B cell (primary cell): ENCODE measurements at regions of chr3 and their contacts with region 1.

Region 1: DNA sequence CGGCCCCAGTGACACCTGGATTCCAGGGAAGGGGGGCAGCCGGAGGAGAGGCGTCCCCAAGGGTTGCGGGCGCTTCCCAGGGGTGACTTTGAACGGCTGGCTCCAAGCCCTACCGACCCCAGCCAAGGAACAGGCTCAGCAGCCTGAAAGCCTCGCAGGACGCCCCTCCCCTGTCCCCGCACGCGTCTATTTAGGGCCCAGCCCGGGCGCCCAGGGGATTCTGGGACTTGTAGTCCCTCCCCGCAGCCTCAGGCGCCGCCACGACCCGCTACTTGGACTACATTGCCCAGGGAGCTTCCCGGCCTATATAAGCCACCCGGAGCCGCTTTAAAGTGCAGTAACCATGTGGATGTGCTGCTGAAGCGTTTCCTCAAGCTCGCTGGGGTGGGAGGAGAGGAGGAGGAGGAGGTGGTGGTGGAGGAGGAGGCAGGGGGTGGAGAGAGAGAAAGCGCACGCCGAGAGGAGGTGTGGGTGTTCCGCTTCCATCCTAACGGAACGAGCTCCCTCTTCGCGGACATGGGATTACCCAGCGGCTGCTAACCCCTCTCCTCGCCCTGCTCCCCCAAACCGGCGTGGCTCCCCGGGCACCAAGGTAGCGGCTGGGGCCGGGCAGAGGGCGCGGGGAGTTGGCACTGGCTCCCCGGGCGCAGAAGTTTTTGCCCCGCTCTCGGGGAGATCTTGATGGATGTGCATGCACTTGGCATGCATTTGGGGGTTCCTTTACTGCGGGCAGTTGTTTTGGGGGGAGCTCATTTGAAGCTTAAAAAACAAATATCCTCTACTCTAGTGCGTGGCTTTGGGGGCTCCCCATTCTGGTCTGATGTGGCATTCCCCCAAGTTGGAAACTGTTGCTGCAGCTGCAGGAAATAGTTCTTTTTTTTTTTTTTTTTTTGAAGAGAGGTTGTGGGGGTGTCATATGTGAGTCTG is at the start of gene ITPR1:
- DNase-seq: peak; percentile 98
- ATAC-seq: peak; percentile 88
- H3K4me3 ChIP-seq: peak within 1 kb of the TSS; percentile 90 to 98 (median 92)
- H3K4me3 Mint-ChIP-seq: peak within 1 kb of the TSS; percentile 96
- H3K27ac ChIP-seq: peak within 1 kb of the TSS; percentile 86 to 89
- H3K27ac Mint-ChIP-seq: peak within 1 kb of the TSS; percentile 95
- H3K4me1 ChIP-seq: peaks cover 34 to 39% of the 10 kb centered on the region in 2 donors
- H3K4me1 Mint-ChIP-seq: peaks cover 48% of the 10 kb centered on the region
- H3K27me3 ChIP-seq: no peaks in the 10 kb centered on the region
- H3K27me3 Mint-ChIP-seq: no peaks in the 10 kb centered on the region
- CTCF ChIP-seq: no peak
- total RNA-seq, gene ITPR1: 332 and 357 TPM in 2 replicates

Region 2: DNA sequence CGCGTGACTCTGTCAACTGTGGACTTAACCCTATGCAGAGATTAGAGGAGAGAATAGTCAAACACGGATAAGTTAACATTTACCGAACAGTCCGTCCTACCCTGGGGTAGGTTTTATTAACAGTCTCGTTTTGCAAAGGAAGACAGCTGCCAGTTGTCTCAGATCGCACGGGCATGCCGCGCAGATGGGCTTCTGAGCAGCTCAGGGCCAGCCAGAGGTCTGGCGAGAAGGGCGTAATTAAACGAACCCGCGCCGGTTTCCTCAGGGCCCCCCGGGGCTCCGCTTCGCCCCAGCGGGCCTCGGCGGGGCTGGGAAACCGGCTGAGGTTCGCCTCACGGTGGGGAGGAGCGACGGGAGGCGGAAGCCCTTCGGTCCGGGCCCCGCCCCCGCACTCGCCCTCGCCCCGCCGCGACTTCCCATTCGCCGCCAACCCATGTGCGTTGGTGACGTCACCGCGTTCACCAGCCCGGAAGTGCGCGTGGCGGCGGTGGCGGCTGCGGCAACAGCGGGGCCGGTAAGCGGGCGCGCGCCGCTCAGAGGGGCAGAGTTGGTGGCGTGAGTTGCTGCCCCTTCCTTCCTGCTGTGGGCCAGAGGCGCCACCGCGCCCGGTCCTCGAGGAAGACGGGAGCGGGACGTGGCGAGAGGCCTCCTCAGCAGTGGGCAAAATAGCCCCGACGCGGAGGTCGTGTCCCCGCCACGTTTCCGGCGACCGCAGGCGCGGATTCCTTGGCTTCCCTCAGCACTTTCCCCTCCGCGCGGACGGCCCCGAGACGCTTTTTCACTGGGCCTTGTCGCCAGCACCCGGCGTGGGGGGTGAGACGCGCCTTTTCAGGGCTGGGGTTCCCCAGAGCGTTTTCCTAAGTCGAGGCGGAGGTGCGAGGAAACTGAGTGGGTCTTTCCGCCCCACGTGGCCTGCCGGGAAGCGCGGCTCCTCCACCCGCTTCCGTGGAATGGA is 1366.5 kb before region 1 on chr3 and contains the start of gene TRNT1:
- CTCF ChIA-PET with region 1: no interaction called
- POLR2A ChIA-PET with region 1: no interaction called
- intact Hi-C with region 1: loop called (anchors 5 kb)
- DNase-seq: peak; percentile 97
- ATAC-seq: peak; percentile 97
- H3K4me3 ChIP-seq: peak within 1 kb of the TSS; percentile 72 to 97 (median 86)
- H3K4me3 Mint-ChIP-seq: peak within 1 kb of the TSS; percentile 97
- H3K27ac ChIP-seq: peak within 1 kb of the TSS; percentile 89 to 97
- H3K27ac Mint-ChIP-seq: peak within 1 kb of the TSS; percentile 97
- H3K4me1 ChIP-seq: peaks cover 15 to 24% of the 10 kb centered on the region in 2 donors
- H3K4me1 Mint-ChIP-seq: peaks cover 30% of the 10 kb centered on the region
- H3K27me3 ChIP-seq: no peaks in the 10 kb centered on the region
- H3K27me3 Mint-ChIP-seq: no peaks in the 10 kb centered on the region
- CTCF ChIP-seq: no peak
- total RNA-seq, gene TRNT1: 40.6 and 52.8 TPM in 2 replicates

Region 3: GRCh38 chr3:4303187-4304123 is 189.8 kb before region 1 on chr3 and contains the start of gene SETMAR:
- CTCF ChIA-PET with region 1: no interaction called
- POLR2A ChIA-PET with region 1: no interaction called
- intact Hi-C with region 1: loop called (anchors 1 kb)
- DNase-seq: peak; percentile 91
- ATAC-seq: peak; percentile 94
- H3K4me3 ChIP-seq: peak within 1 kb of the TSS; percentile 62 to 88 (median 85)
- H3K4me3 Mint-ChIP-seq: peak within 1 kb of the TSS; percentile 100
- H3K27ac ChIP-seq: peak within 1 kb of the TSS; percentile 64 to 79
- H3K27ac Mint-ChIP-seq: peak within 1 kb of the TSS; percentile 99
- H3K4me1 ChIP-seq: peaks cover 0 to 12% of the 10 kb centered on the region in 2 donors
- H3K4me1 Mint-ChIP-seq: peaks cover 16% of the 10 kb centered on the region
- H3K27me3 ChIP-seq: no peaks in the 10 kb centered on the region
- H3K27me3 Mint-ChIP-seq: no peaks in the 10 kb centered on the region
- CTCF ChIP-seq: no peak
- total RNA-seq, gene SETMAR: 6.8 and 7.6 TPM in 2 replicates

Region 4: GRCh38 chr3:4466741-4467521 is 26.3 kb before region 1 on chr3 and contains the start of gene SUMF1:
- CTCF ChIA-PET with region 1: interaction called, 6 read pairs
- POLR2A ChIA-PET with region 1: interaction called, 20 read pairs
- intact Hi-C with region 1: loop called (anchors 1 kb)
- DNase-seq: peak; percentile 80
- ATAC-seq: peak; percentile 90
- H3K4me3 ChIP-seq: peak within 1 kb of the TSS; percentile 80 to 90 (median 86)
- H3K4me3 Mint-ChIP-seq: peak within 1 kb of the TSS; percentile 97
- H3K27ac ChIP-seq: peak within 1 kb of the TSS; percentile 72 to 92
- H3K27ac Mint-ChIP-seq: peak within 1 kb of the TSS; percentile 95
- H3K4me1 ChIP-seq: peaks cover 9 to 11% of the 10 kb centered on the region in 2 donors
- H3K4me1 Mint-ChIP-seq: peaks cover 18% of the 10 kb centered on the region
- H3K27me3 ChIP-seq: no peaks in the 10 kb centered on the region
- H3K27me3 Mint-ChIP-seq: no peaks in the 10 kb centered on the region
- CTCF ChIP-seq: no peak
- total RNA-seq, gene SUMF1: 21.2 and 24.0 TPM in 2 replicates

Region 5: DNA sequence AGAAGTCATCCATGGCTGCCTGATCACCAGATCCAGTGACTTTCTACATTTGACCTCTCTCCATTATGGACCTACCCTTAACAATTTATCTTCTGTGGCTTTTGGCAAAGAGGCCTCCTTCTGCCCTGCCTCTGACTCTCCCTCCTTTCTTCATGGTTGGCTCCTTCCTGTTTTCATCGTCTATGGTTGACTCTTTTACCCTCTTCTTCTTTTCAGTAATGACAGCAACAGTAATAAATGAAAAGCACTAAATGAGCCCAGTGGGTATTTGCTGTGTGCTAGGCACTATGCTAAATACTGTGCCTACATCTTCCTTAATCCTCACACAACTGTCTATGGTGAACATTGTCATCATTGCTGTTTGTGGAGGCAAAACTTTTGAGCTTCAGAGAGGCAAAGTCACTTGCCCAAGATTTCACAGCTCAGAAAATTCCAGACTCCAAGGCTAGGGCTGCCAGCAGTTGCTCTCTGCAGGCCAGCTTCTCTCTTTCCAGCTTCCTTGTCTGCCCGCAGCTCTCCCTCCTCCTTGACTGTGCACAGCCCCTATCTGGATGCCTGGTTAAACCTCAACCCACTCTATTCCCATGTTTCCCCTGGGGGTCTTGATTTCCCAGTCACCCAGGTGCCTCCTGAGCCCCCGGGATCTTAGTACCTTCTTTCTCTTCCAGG is 24.5 kb after region 1 on chr3:
- CTCF ChIA-PET with region 1: interaction called, 44 read pairs
- POLR2A ChIA-PET with region 1: interaction called, 8 read pairs
- intact Hi-C with region 1: loop called (anchors 1 kb)
- DNase-seq: no peak
- ATAC-seq: peak; percentile 36
- H3K4me3 ChIP-seq: no peak overlapping the region
- H3K4me3 Mint-ChIP-seq: peak overlapping the region; percentile 32
- H3K27ac ChIP-seq: peak overlapping the region in 1 of 2 donors; percentile 70
- H3K27ac Mint-ChIP-seq: peak overlapping the region; percentile 73
- H3K4me1 ChIP-seq: peaks cover 55 to 58% of the 10 kb centered on the region in 2 donors
- H3K4me1 Mint-ChIP-seq: peaks cover 72% of the 10 kb centered on the region
- H3K27me3 ChIP-seq: no peaks in the 10 kb centered on the region
- H3K27me3 Mint-ChIP-seq: no peaks in the 10 kb centered on the region
- CTCF ChIP-seq: no peak

Region 6: GRCh38 chr3:4633078-4634004 is 140.1 kb after region 1 on chr3:
- CTCF ChIA-PET with region 1: interaction called, 23 read pairs
- POLR2A ChIA-PET with region 1: no interaction called
- intact Hi-C with region 1: loop called (anchors 1 kb)
- DNase-seq: peak; percentile 64
- ATAC-seq: peak; percentile 43
- H3K4me3 ChIP-seq: no peak overlapping the region
- H3K4me3 Mint-ChIP-seq: no peak overlapping the region
- H3K27ac ChIP-seq: peak overlapping the region in 1 of 2 donors; percentile 26
- H3K27ac Mint-ChIP-seq: peak overlapping the region; percentile 78
- H3K4me1 ChIP-seq: no peaks in the 10 kb centered on the region
- H3K4me1 Mint-ChIP-seq: peaks cover 13% of the 10 kb centered on the region
- H3K27me3 ChIP-seq: no peaks in the 10 kb centered on the region
- H3K27me3 Mint-ChIP-seq: no peaks in the 10 kb centered on the region
- CTCF ChIP-seq: peak; percentile 91

Region 7: DNA sequence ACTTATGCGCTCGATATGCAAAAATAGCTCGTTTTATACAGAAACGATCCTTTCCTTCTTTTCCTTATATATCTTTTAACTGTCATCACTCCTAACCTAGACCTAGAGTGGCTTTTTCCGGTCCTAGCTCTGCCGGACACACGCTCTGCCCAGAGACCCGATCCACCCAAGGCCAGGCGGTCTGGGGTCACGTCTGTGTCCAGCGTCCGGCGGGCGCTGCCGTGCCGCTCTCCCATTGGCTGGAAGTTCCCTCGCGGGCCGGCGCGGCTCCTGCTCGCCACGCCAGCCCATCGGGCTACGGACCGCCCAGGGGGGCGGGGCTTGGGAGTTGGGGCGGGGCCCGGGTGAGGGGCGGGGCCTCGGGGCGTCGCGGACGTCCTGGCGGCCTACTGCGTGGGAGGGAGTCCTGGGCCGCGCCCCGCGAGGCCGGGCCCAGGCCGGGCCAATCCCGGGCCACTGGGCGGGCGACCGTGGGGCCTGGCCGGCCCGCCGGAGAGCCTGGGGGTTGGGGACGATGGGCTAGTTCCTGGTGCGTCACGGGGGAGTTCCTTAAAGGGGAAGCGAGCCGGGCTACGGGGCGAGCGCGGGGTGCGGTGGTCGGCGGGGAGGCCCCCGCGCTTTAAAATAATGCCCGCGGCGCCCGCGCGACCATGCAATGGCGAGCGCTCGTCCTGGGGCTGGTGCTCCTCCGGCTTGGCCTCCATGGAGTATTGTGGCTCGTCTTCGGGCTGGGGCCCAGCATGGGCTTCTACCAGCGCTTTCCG is 694.1 kb after region 1 on chr3 and contains the start of gene EDEM1:
- CTCF ChIA-PET with region 1: no interaction called
- POLR2A ChIA-PET with region 1: no interaction called
- intact Hi-C with region 1: loop called (anchors 5 kb)
- DNase-seq: peak; percentile 96
- ATAC-seq: peak; percentile 88
- H3K4me3 ChIP-seq: peak within 1 kb of the TSS; percentile 91 to 99 (median 94)
- H3K4me3 Mint-ChIP-seq: peak within 1 kb of the TSS; percentile 99
- H3K27ac ChIP-seq: peak within 1 kb of the TSS; percentile 94 to 96
- H3K27ac Mint-ChIP-seq: peak within 1 kb of the TSS; percentile 99
- H3K4me1 ChIP-seq: peaks cover 69 to 75% of the 10 kb centered on the region in 2 donors
- H3K4me1 Mint-ChIP-seq: peaks cover 69% of the 10 kb centered on the region
- H3K27me3 ChIP-seq: no peaks in the 10 kb centered on the region
- H3K27me3 Mint-ChIP-seq: no peaks in the 10 kb centered on the region
- CTCF ChIP-seq: no peak
- total RNA-seq, gene EDEM1: 167 and 177 TPM in 2 replicates